CD8-positive, alpha-beta T cell (primary cell): ENCODE measurements at regions of chr9 and their contacts with region 1.

Region 1: GRCh38 chr9:130107234-130107861 is 53.6 kb downstream of the GPR107 start:
- DNase-seq: peak; percentile 68 to 91 (median 87)
- ATAC-seq: peak; percentile 90
- H3K4me3 ChIP-seq: no peak overlapping the region
- H3K4me3 Mint-ChIP-seq: no peak overlapping the region
- H3K27ac ChIP-seq: peak overlapping the region in 1 of 2 experiments; percentile 26
- H3K27ac Mint-ChIP-seq: peak overlapping the region; percentile 72
- H3K4me1 ChIP-seq: peaks cover 8% of the 10 kb centered on the region
- H3K4me1 Mint-ChIP-seq: peaks cover 14% of the 10 kb centered on the region
- H3K27me3 ChIP-seq: no peaks in the 10 kb centered on the region
- H3K27me3 Mint-ChIP-seq: no peaks in the 10 kb centered on the region
- CTCF ChIP-seq: peak; percentile 86

Region 2: GRCh38 chr9:130118841-130119518 is 11.6 kb after region 1 on chr9:
- CTCF ChIA-PET with region 1: interaction called, 36 read pairs
- POLR2A ChIA-PET with region 1: no interaction called
- intact Hi-C with region 1: no loop called
- DNase-seq: no peak
- ATAC-seq: no peak
- H3K4me3 ChIP-seq: no peak overlapping the region
- H3K4me3 Mint-ChIP-seq: no peak overlapping the region
- H3K27ac ChIP-seq: no peak overlapping the region
- H3K27ac Mint-ChIP-seq: peak overlapping the region; percentile 71
- H3K4me1 ChIP-seq: no peaks in the 10 kb centered on the region
- H3K4me1 Mint-ChIP-seq: peaks cover 13% of the 10 kb centered on the region
- H3K27me3 ChIP-seq: no peaks in the 10 kb centered on the region
- H3K27me3 Mint-ChIP-seq: no peaks in the 10 kb centered on the region
- CTCF ChIP-seq: no peak

Region 3: GRCh38 chr9:130159915-130160670 is 52.7 kb after region 1 on chr9:
- CTCF ChIA-PET with region 1: no interaction called
- POLR2A ChIA-PET with region 1: no interaction called
- intact Hi-C with region 1: loop called in 1 of 2 experiments (anchors 5 kb)
- DNase-seq: no peak
- ATAC-seq: no peak
- H3K4me3 ChIP-seq: no peak overlapping the region
- H3K4me3 Mint-ChIP-seq: no peak overlapping the region
- H3K27ac ChIP-seq: no peak overlapping the region
- H3K27ac Mint-ChIP-seq: no peak overlapping the region
- H3K4me1 ChIP-seq: no peaks in the 10 kb centered on the region
- H3K4me1 Mint-ChIP-seq: no peaks in the 10 kb centered on the region
- H3K27me3 ChIP-seq: no peaks in the 10 kb centered on the region
- H3K27me3 Mint-ChIP-seq: no peaks in the 10 kb centered on the region
- CTCF ChIP-seq: no peak

Region 4: DNA sequence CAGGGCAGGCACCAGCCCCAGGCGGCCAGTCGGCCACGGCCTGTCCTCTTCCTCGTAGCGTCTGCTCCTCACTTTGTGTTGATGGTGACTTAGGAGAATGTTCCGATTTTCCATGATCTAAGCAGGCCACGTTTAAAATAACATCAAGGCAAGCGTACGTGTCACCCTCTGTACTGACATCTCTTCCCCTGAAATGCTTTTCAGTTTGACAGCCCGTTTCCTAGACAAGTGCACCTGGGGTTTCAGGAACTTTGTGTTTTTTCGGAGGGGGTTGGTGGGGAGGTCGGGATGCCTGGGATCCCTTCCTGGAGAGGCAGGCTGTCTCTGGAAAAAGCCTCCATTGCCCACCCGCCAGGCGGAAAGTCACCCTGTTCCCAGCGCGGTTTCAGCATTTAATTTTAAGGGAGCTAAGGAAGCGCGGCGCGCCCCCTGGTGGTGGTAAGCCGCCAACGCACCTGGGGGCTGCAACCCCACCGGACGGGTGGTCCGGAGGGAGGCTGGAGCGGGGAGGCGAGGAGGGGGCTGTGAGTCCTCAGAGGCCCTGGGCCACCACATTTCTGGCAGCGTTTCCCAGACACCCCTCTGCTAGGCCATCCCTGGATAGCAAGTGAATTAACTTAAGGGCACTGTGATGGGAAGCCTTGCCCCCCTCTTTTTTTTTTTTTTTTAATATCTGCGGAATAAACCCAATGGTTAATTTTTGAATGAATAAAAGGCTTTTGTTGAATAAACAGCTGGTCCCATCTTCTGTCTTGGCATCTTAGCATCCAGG is 128.7 kb after region 1 on chr9:
- CTCF ChIA-PET with region 1: interaction called, 232 read pairs
- POLR2A ChIA-PET with region 1: no interaction called
- intact Hi-C with region 1: loop called (anchors 1 kb)
- DNase-seq: peak; percentile 53 to 85 (median 70)
- ATAC-seq: peak; percentile 66
- H3K4me3 ChIP-seq: no peak overlapping the region
- H3K4me3 Mint-ChIP-seq: peak overlapping the region; percentile 42
- H3K27ac ChIP-seq: no peak overlapping the region
- H3K27ac Mint-ChIP-seq: no peak overlapping the region
- H3K4me1 ChIP-seq: peaks cover 5% of the 10 kb centered on the region
- H3K4me1 Mint-ChIP-seq: peaks cover 8% of the 10 kb centered on the region
- H3K27me3 ChIP-seq: no peaks in the 10 kb centered on the region
- H3K27me3 Mint-ChIP-seq: no peaks in the 10 kb centered on the region
- CTCF ChIP-seq: peak; percentile 98

Region 5: GRCh38 chr9:130343445-130343918 is 236.1 kb after region 1 on chr9:
- CTCF ChIA-PET with region 1: interaction called, 3 read pairs
- POLR2A ChIA-PET with region 1: no interaction called
- intact Hi-C with region 1: loop called (anchors 2 kb)
- DNase-seq: peak in 3 of 9 experiments; percentile 23 to 26 (median 25)
- ATAC-seq: no peak
- H3K4me3 ChIP-seq: no peak overlapping the region
- H3K4me3 Mint-ChIP-seq: no peak overlapping the region
- H3K27ac ChIP-seq: no peak overlapping the region
- H3K27ac Mint-ChIP-seq: no peak overlapping the region
- H3K4me1 ChIP-seq: no peaks in the 10 kb centered on the region
- H3K4me1 Mint-ChIP-seq: no peaks in the 10 kb centered on the region
- H3K27me3 ChIP-seq: peaks cover 0 to 15% of the 10 kb centered on the region in 2 experiments
- H3K27me3 Mint-ChIP-seq: no peaks in the 10 kb centered on the region
- CTCF ChIP-seq: peak; percentile 27

Region 6: GRCh38 chr9:130824643-130825350 is 717.4 kb after region 1 on chr9:
- CTCF ChIA-PET with region 1: no interaction called
- POLR2A ChIA-PET with region 1: no interaction called
- intact Hi-C with region 1: no loop called
- DNase-seq: no peak
- ATAC-seq: no peak
- H3K4me3 ChIP-seq: no peak overlapping the region
- H3K4me3 Mint-ChIP-seq: no peak overlapping the region
- H3K27ac ChIP-seq: no peak overlapping the region
- H3K27ac Mint-ChIP-seq: no peak overlapping the region
- H3K4me1 ChIP-seq: no peaks in the 10 kb centered on the region
- H3K4me1 Mint-ChIP-seq: peaks cover 3% of the 10 kb centered on the region
- H3K27me3 ChIP-seq: no peaks in the 10 kb centered on the region
- H3K27me3 Mint-ChIP-seq: no peaks in the 10 kb centered on the region
- CTCF ChIP-seq: no peak